Calu3 (cell line): ENCODE measurements at regions of chr2 and their contacts with region 1.

Region 1: GRCh38 chr2:227406177-227407031 is 18.7 kb upstream of the SCYGR1 start:
- DNase-seq: peak; percentile 78
- H3K4me3 Mint-ChIP-seq: no peak overlapping the region
- H3K27ac Mint-ChIP-seq: peak overlapping the region; percentile 86
- H3K4me1 Mint-ChIP-seq: peaks cover 50% of the 10 kb centered on the region
- H3K27me3 Mint-ChIP-seq: no peaks in the 10 kb centered on the region
- CTCF ChIP-seq: peak; percentile 69

Region 2: GRCh38 chr2:227471924-227472264 is 65.5 kb after region 1 on chr2 and contains the start of gene AGFG1:
- CTCF ChIA-PET with region 1: interaction called, 19 read pairs
- intact Hi-C with region 1: loop called (anchors 2 kb)
- DNase-seq: peak; percentile 92
- H3K4me3 Mint-ChIP-seq: peak within 1 kb of the TSS; percentile 81
- H3K27ac Mint-ChIP-seq: peak within 1 kb of the TSS; percentile 57
- H3K4me1 Mint-ChIP-seq: peaks cover 40% of the 10 kb centered on the region
- H3K27me3 Mint-ChIP-seq: no peaks in the 10 kb centered on the region
- CTCF ChIP-seq: peak; percentile 99
- total RNA-seq, gene AGFG1: 115 and 126 TPM in 2 replicates

Region 3: DNA sequence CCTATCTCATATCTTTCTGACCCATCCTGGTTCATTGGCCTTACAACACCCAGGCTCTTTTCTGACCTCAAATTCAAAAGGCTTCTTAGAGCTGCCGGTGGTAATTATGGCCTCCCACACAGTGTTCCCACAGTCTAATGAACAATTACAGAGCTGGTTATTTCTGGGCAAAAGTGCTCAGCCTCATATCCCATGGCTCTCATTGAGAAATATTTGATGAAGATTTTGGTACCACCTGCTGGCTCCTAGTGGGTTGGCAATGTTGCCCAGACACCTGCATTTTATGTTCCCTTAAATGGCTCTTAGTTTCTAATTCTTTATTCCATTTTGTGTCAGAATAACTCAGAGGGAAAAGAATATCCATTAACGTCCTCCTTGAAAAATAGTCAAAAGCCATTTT is 172.2 kb after region 1 on chr2:
- CTCF ChIA-PET with region 1: interaction called, 3 read pairs
- intact Hi-C with region 1: loop called (anchors 5 kb)
- DNase-seq: no peak
- H3K4me3 Mint-ChIP-seq: no peak overlapping the region
- H3K27ac Mint-ChIP-seq: no peak overlapping the region
- H3K4me1 Mint-ChIP-seq: no peaks in the 10 kb centered on the region
- H3K27me3 Mint-ChIP-seq: no peaks in the 10 kb centered on the region
- CTCF ChIP-seq: no peak

Region 4: DNA sequence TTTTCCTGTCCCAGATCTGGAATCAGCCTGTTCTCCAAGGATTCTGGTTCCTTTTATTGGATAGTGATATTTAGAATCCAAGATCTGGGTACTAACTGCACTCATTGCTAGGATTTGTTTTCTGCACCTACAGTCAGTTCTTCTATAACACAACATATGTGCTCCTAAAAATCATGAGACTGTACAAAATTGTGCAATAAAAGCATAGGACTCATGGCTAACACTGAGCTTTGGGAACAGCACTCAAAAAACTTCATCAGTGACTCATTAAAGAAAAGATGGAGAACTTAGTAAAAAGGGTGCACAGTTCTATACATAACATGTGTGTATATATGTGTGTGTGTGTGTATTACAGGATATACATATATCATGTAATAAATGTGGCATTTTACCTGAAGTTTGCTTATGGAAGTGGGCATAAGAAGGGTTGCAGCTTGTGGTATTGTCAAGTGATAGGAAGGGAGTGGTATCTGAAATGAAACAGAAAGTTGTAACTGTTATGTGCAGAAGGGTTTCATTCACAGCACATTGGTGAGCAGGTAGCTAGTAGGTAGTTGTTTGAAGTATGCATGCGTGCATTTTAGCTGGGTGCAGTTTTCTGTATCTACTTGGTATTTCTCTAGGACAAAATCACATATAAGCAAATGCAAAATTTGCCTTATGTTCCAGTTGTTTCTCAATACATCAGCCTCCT is 186.4 kb after region 1 on chr2:
- CTCF ChIA-PET with region 1: no interaction called
- intact Hi-C with region 1: no loop called
- DNase-seq: no peak
- H3K4me3 Mint-ChIP-seq: no peak overlapping the region
- H3K27ac Mint-ChIP-seq: no peak overlapping the region
- H3K4me1 Mint-ChIP-seq: peaks cover 1% of the 10 kb centered on the region
- H3K27me3 Mint-ChIP-seq: no peaks in the 10 kb centered on the region
- CTCF ChIP-seq: no peak

Region 5: GRCh38 chr2:227766373-227766883 is 360.0 kb after region 1 on chr2:
- CTCF ChIA-PET with region 1: interaction called, 17 read pairs
- intact Hi-C with region 1: loop called (anchors 1 kb)
- DNase-seq: peak; percentile 90
- H3K4me3 Mint-ChIP-seq: no peak overlapping the region
- H3K27ac Mint-ChIP-seq: peak overlapping the region; percentile 7
- H3K4me1 Mint-ChIP-seq: peaks cover 38% of the 10 kb centered on the region
- H3K27me3 Mint-ChIP-seq: no peaks in the 10 kb centered on the region
- CTCF ChIP-seq: peak; percentile 91